GM13976 (cell line): ENCODE measurements at regions of chr11 and their contacts with region 1.

Region 1: GRCh38 chr11:12066799-12067508 is 43.4 kb upstream of the MICAL2 start:
- DNase-seq: no peak
- CTCF ChIP-seq: no peak

Region 2: GRCh38 chr11:12235947-12236743 is 169.2 kb after region 1 on chr11:
- in situ Hi-C with region 1: loop called (anchors 25 kb)
- DNase-seq: peak; percentile 62
- CTCF ChIP-seq: peak; percentile 53